CD4-positive, alpha-beta memory T cell (primary cell): ENCODE measurements at regions of chr2 and their contacts with region 1.

Region 1: DNA sequence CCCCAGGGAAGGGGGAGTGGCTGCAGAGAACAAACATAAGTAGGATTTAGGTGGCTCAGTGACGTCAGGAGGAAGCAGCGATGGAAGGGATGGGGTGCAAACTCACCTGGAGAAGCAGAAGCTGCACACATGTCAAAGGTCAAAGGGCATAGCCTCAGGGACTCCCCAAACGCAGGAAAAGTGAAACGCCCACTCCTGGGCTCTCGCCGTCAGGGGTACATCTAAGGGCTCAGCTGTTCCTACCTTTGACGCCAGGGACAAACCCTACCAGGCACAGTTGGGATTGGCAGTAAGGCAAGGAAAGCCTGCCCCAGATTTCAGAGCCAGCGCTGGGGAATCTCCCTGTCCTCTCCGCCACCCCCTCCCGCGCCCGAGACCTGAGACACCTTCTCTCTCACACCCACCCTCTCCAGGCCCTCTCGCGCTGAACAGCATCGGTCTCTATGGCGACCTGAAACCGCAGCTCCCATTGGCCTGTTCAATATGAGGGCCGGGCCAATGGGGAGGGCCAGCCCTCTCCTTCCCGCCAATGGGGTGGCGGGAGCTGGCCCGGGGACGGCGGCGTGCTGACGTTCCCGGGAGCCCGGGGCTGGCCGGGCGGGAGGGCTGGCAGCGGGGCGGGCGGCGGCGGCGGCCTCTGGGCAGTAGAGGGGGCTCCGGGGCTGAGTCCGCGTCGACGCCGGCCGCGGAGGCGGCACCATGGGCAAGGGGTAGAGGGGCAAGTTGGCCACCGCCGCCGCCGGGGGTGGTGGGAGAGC is at the starts of genes CCDC148 and PKP4:
- DNase-seq: peak; percentile 88 to 97 (median 90)
- H3K4me3 ChIP-seq: peak within 1 kb of the TSS; percentile 57 to 84
- H3K4me3 Mint-ChIP-seq: peak within 1 kb of the TSS; percentile 91 to 98 (median 94)
- H3K27ac ChIP-seq: peak within 1 kb of the TSS; percentile 67
- H3K27ac Mint-ChIP-seq: peak within 1 kb of the TSS; percentile 91 to 97 (median 93)
- H3K4me1 ChIP-seq: peaks cover 23% of the 10 kb centered on the region
- H3K4me1 Mint-ChIP-seq: peaks cover 17 to 38% (median 26%) of the 10 kb centered on the region in 4 donors
- H3K27me3 ChIP-seq: no peaks in the 10 kb centered on the region
- H3K27me3 Mint-ChIP-seq: peaks cover 0 to 3% of the 10 kb centered on the region in 2 donors
- total RNA-seq, gene CCDC148: not detected
- total RNA-seq, gene PKP4: 35.0 to 39.3 TPM

Region 2: DNA sequence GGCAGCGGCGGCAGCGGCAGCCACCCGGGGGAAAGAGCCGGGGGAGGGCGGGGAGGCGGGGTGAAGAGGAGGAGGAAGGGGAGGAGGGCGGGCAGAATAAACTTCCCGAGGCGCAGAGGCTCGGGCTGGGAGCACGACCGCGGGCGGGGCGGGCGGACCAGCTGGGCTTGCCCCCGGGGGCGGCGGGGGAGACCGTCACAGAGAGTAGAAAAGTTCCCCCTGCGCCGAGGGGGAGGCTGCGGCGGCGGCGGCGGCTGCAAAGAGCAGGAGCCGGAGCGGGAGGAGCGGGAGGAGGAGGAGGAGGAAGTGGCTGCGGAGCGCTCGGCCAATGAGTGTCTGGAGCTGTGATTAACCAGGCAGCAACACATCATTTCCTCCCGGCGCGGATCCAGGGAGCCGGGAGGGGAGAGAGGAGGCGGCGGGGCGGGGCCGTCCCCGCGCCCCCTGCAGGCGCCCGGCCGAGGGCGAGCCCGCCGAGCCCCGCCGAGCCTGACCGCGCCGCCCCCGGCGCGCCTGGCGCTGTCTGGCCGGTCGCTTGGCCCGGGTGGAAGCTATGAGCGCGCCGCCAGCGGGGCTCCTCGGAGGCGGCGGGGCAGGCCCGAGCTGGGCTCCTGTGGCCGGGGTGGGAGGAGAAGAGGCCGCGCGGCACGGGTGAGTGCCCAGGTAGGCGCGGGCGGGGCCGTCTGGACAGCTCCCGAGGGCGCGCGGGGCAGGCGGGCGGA is 580.3 kb before region 1 on chr2 and contains the start of gene ACVR1:
- CTCF ChIA-PET with region 1: no interaction called
- POLR2A ChIA-PET with region 1: no interaction called
- intact Hi-C with region 1: loop called (anchors 5 kb)
- DNase-seq: peak; percentile 78 to 90 (median 80)
- H3K4me3 ChIP-seq: peak within 1 kb of the TSS; percentile 74 to 76
- H3K4me3 Mint-ChIP-seq: peak within 1 kb of the TSS; percentile 94 to 100 (median 96)
- H3K27ac ChIP-seq: peak within 1 kb of the TSS; percentile 66
- H3K27ac Mint-ChIP-seq: peak within 1 kb of the TSS; percentile 88 to 96 (median 93)
- H3K4me1 ChIP-seq: peaks cover 71% of the 10 kb centered on the region
- H3K4me1 Mint-ChIP-seq: peaks cover 46 to 69% (median 60%) of the 10 kb centered on the region in 4 donors
- H3K27me3 ChIP-seq: no peaks in the 10 kb centered on the region
- H3K27me3 Mint-ChIP-seq: no peaks in the 10 kb centered on the region
- total RNA-seq, gene ACVR1: 26.9 to 31.9 TPM

Region 3: DNA sequence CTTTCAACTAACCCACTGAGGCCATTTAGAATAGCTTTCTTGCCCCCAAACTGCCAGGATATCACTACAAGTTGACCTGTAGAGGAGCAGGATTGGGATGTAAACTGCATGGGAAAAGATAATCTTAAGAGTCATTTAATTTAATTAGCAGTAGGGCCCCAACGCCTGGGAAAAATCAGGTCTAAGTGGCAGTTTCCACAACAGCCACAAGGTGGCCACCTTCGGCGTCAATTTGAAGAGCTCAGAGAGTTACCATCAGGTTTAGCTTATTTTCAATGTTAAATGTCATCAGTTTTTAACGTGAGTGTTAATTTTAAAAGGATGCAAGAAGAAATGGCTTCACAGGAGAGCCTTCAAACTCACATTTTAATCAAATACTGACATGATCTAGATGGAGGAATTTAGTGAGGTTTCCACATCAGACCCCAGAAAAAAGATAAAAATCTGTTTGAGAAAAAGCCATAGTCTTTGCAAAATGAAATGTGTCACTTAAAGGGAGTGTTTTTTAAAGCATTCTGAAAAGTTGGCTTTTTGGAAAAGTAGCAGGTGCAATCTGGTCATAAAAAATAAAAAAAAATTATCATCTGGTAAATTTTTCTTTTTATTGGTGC is 432.1 kb before region 1 on chr2:
- CTCF ChIA-PET with region 1: interaction called, 3 read pairs
- POLR2A ChIA-PET with region 1: no interaction called
- intact Hi-C with region 1: loop called (anchors 5 kb)
- DNase-seq: peak in 4 of 5 donors; percentile 28 to 45 (median 37)
- H3K4me3 ChIP-seq: no peak overlapping the region
- H3K4me3 Mint-ChIP-seq: no peak overlapping the region
- H3K27ac ChIP-seq: no peak overlapping the region
- H3K27ac Mint-ChIP-seq: no peak overlapping the region
- H3K4me1 ChIP-seq: peaks cover 10% of the 10 kb centered on the region
- H3K4me1 Mint-ChIP-seq: peaks cover 4 to 10% (median 7%) of the 10 kb centered on the region in 4 donors
- H3K27me3 ChIP-seq: no peaks in the 10 kb centered on the region
- H3K27me3 Mint-ChIP-seq: peaks cover 0 to 2% of the 10 kb centered on the region in 2 donors

Region 4: DNA sequence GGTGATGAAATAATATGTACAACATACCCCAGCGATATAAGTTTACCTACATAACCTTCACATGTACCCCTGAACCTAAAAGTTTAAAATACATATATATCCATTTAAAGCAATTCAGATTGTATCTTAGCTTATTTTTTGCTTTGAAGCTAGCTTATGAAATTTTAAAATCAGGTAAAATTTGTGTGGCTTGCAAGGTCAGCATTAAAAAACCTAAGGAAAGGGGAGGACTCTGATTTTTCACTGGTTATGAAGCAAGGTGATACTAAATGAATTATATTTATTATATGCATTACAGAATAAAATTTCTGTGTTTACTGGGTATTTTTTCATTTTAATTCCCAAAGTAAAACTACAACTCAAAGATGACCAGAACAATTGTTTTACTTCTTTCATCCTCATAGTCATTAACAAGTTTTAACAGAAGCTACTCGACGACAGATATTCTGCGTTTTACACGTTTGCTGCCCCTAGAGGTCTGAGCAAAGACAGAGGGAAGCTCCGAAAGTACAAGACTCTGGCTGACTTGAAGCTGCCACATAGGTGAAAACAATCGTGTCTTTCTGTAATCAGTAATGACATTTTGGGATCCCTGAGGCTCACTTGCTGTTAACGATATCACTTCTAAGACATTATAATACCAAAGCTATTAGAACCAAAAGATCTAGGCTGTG is 17.4 kb after region 1 on chr2:
- CTCF ChIA-PET with region 1: interaction called, 24 read pairs
- POLR2A ChIA-PET with region 1: interaction called, 21 read pairs
- intact Hi-C with region 1: loop called (anchors 2 kb)
- DNase-seq: no peak
- H3K4me3 ChIP-seq: no peak overlapping the region
- H3K4me3 Mint-ChIP-seq: no peak overlapping the region
- H3K27ac ChIP-seq: no peak overlapping the region
- H3K27ac Mint-ChIP-seq: peak overlapping the region in 2 of 7 donors; percentile 46
- H3K4me1 ChIP-seq: peaks cover 33% of the 10 kb centered on the region
- H3K4me1 Mint-ChIP-seq: peaks cover 18 to 30% (median 26%) of the 10 kb centered on the region in 4 donors
- H3K27me3 ChIP-seq: no peaks in the 10 kb centered on the region
- H3K27me3 Mint-ChIP-seq: no peaks in the 10 kb centered on the region

Region 5: DNA sequence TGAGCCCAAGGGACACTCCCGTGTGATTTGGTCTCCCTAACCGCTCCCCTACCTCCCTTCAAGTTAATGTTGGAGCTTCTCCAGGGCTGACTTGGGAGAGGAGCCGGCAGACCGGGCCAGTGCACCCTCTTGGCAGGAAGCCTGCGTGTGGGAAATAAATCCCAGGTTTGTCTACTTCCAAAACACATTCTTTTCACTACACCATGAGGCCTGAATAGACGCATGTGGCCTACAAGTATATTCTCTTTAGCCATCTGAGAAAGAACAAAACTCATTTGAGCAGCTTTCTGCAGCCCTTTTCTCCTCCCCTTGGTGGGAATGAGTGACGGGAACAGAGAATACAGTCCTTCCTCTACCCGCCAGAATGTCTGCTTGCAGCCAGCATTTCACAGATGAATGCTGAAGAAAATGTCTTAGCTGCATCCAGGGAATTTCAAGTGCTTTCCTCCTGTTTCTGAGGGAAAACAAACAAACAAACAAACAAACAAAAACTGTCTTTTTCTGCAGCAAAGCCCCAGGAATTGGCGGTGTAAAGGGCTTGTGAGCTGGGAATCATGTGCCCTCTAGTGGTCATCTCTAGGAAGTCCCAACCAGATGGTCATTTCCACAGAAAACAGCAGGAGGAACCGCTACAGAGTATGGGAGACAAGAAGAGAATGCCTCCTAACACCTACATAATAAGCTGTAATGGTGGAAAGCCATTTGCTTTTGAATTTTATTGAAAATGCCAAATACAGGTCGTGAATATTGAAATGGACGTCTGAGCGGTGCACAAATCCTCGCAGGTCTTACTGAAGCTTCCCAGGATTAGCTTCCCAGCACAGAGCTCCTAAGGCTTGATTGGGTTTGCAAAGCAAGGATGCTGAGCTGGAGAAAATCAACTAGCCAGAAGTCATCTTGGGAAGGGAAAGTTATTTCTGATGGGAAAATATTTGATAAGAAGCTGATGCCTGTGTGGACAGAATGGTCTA is 297.4 kb after region 1 on chr2:
- CTCF ChIA-PET with region 1: interaction called, 7 read pairs
- POLR2A ChIA-PET with region 1: no interaction called
- intact Hi-C with region 1: loop called (anchors 5 kb)
- DNase-seq: peak in 4 of 5 donors; percentile 31 to 43 (median 36)
- H3K4me3 ChIP-seq: no peak overlapping the region
- H3K4me3 Mint-ChIP-seq: no peak overlapping the region
- H3K27ac ChIP-seq: no peak overlapping the region
- H3K27ac Mint-ChIP-seq: no peak overlapping the region
- H3K4me1 ChIP-seq: no peaks in the 10 kb centered on the region
- H3K4me1 Mint-ChIP-seq: no peaks in the 10 kb centered on the region
- H3K27me3 ChIP-seq: no peaks in the 10 kb centered on the region
- H3K27me3 Mint-ChIP-seq: peaks cover 16 to 24% of the 10 kb centered on the region in 2 donors